ENCODE measurements at regions of chr17 and their contacts with region 1.

Region 1: GRCh38 chr17:64648234-64648633 is 13.9 kb downstream of the SMURF2 start:
- DNase-seq: no peak

Region 2: GRCh38 chr17:64515419-64515818 is 132.8 kb before region 1 on chr17:
- intact Hi-C with region 1: loop called (anchors 10 kb)
- DNase-seq: no peak

Region 3: GRCh38 chr17:64582879-64583632 is 65.2 kb before region 1 on chr17:
- intact Hi-C with region 1: no loop called
- DNase-seq: no peak

Region 4: DNA sequence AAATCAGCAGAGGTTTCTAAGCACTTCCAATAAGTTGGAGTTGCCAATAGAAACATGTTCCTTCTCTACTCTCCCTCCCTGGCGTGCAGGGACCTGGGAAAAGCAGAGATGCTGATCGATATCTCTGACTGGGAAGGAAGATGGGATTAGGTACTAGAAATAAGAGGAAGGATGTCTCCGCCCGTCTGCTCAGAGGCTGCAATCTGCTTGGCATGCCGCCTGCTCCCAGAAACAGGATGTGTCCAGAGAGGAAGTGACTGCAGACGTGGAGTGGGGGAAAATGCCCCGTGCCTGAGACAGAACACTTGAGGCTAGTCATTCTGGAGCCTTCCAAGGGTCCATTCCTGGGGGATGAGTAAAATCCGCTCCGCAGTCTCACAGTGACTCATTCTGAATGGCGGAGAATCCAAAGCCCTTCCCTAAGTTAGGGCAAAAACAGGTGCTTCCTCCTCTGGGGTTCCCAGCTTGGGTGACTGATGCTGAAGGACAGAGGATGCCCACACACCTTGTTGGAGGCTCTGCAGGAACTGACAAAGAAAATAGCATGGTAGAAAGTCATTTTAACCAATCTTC is 58.9 kb after region 1 on chr17:
- intact Hi-C with region 1: no loop called
- DNase-seq: peak in 40 of 42 donors; percentile 8 to 69 (median 46)

Measured in head of caudate nucleus (tissue), 42 donors.